GM12878 (cell line): ENCODE measurements at regions of chrX and their contacts with region 1.

Region 1: DNA sequence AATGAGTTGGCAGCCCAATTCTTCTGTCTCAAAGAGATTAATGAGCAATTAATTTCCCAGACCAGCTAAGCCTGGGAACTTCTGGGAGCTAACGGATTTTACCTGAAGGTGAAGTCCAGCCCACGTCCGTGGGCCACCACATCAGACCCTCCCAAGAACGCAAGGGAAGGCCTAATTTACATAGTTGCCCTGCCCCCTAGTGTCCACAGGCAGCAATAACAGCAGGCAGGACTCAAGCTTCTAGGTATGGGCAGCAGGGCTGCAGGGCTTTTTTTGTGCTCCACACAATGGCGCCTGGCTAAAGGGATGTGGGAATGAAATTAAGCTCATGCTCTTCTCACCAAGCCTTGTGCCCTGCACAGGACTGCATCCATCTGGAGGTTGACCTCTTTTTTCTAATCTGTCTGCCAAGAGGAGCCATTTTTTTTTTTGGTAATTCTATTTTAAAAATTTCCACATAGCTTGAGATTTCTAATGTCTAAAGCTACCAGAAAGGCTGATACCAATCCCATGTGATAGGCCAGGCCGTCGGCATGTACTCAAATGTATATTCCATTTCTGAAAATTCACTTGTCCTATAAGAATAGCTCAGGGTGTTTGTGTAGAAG is 111.9 kb upstream of the TMEM164 start:
- DNase-seq: no peak
- ATAC-seq: peak; percentile 77
- H3K4me3 ChIP-seq: no peak overlapping the region
- H3K27ac ChIP-seq: no peak overlapping the region
- H3K4me1 ChIP-seq: peaks cover 16% of the 10 kb centered on the region
- H3K27me3 ChIP-seq: no peaks in the 10 kb centered on the region
- CTCF ChIP-seq: peak; percentile 85 to 96 (median 94)
- EP300 ChIP-seq: no peak
- POLR2A ChIP-seq: no peak
- RAD21 ChIP-seq: peak; percentile 81

Region 2: GRCh38 chrX:109485470-109486340 is 405.3 kb before region 1 on chrX:
- CTCF ChIA-PET with region 1: interaction called, 164 read pairs
- POLR2A ChIA-PET with region 1: interaction called, 3 read pairs
- RAD21 ChIA-PET with region 1: interaction called, 74 read pairs
- SMC1A ChIA-PET with region 1: interaction called, 49 read pairs
- in situ Hi-C with region 1: loop called (anchors 5 kb)
- intact Hi-C with region 1: loop called (anchors 1 kb)
- DNase-seq: peak; percentile 34
- ATAC-seq: peak; percentile 84
- H3K4me3 ChIP-seq: no peak overlapping the region
- H3K27ac ChIP-seq: no peak overlapping the region
- H3K4me1 ChIP-seq: no peaks in the 10 kb centered on the region
- H3K27me3 ChIP-seq: no peaks in the 10 kb centered on the region
- CTCF ChIP-seq: peak; percentile 93 to 99 (median 99); a peak in 5 of 6 replicates
- EP300 ChIP-seq: no peak
- POLR2A ChIP-seq: no peak
- RAD21 ChIP-seq: peak; percentile 91

Region 3: DNA sequence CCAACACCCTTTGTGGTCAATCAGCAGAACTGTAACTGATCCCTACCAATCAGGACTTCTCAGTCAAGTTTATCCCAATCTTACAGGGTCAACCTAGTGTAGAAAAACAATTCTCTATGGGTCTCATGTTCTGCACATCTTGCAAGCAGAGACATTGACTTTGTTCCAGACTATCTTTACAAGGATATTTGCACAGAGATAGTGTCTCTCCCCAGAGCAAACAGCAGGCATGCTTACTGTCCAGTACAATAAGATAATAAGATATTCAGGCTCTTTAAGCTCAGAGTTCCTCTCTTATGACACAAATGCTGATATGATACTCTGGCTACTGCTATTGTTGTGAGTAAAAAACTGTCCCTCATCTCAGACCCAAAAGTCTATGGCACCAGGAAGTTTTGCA is 211.2 kb before region 1 on chrX:
- CTCF ChIA-PET with region 1: interaction called, 10 read pairs
- POLR2A ChIA-PET with region 1: no interaction called
- RAD21 ChIA-PET with region 1: no interaction called
- SMC1A ChIA-PET with region 1: no interaction called
- in situ Hi-C with region 1: no loop called
- intact Hi-C with region 1: no loop called
- DNase-seq: no peak
- ATAC-seq: no peak
- H3K4me3 ChIP-seq: no peak overlapping the region
- H3K27ac ChIP-seq: no peak overlapping the region
- H3K4me1 ChIP-seq: no peaks in the 10 kb centered on the region
- H3K27me3 ChIP-seq: no peaks in the 10 kb centered on the region
- CTCF ChIP-seq: no peak
- EP300 ChIP-seq: no peak
- POLR2A ChIP-seq: no peak
- RAD21 ChIP-seq: no peak

Region 4: DNA sequence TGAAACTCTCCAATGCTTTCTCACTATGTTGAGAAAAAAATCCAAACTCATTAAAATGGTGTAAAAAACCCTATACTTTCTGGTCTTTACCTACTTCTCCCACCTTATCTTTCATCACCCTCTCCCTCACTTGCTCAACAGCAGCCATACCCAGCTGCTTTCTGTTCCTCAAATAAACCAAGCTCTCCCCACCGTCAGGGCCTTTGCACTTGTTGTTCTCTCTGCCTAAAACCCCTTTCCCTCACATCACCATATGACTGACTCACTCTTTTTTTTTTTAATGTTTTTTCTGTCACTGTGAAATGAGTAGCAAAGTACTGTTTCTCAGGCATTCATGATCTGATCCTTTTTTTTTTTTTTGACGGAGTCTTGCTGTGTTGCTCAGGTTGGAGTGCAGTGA is 10.4 kb before region 1 on chrX:
- CTCF ChIA-PET with region 1: interaction called, 52 read pairs
- POLR2A ChIA-PET with region 1: interaction called, 4 read pairs
- RAD21 ChIA-PET with region 1: interaction called, 48 read pairs
- SMC1A ChIA-PET with region 1: interaction called, 16 read pairs
- in situ Hi-C with region 1: no loop called
- intact Hi-C with region 1: no loop called
- DNase-seq: peak; percentile 39
- ATAC-seq: peak; percentile 98
- H3K4me3 ChIP-seq: no peak overlapping the region
- H3K27ac ChIP-seq: no peak overlapping the region
- H3K4me1 ChIP-seq: no peaks in the 10 kb centered on the region
- H3K27me3 ChIP-seq: no peaks in the 10 kb centered on the region
- CTCF ChIP-seq: no peak
- EP300 ChIP-seq: peak in 1 of 2 experiments; percentile 28; a peak in 1 of 4 replicates
- POLR2A ChIP-seq: no peak
- RAD21 ChIP-seq: no peak

Region 5: DNA sequence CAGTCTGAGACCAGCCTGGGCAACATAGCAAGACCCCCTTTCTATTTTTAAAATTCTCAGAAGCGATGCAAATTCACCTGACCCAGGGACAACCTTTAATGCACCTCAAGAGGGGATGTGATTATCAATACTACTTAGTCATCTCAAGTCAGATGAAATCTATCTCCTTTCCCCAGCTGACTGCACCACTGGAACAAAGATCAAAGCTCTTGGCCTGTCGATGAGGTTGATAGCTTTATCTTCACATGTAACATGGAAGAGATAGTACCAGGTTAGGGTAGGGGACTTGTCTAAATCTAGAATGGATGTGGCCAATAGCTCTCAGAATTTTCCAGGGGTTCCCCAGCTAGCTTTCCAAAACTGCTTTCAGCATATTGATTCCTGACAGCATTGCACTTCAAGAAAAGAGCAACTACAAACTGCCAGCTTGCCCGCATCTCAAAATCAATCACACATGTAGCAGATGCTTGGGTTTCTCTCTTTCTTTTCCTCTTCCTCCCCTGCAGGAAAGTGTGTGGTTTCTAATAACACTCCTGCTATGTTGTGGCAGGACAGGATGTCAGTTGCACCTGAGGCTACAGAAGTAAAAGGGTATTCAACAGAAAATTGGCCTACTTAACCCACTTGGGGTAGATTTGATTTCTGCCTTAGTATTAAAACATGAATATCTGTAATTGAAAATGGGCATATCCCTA is 99.7 kb after region 1 on chrX:
- CTCF ChIA-PET with region 1: no interaction called
- POLR2A ChIA-PET with region 1: no interaction called
- RAD21 ChIA-PET with region 1: no interaction called
- SMC1A ChIA-PET with region 1: no interaction called
- in situ Hi-C with region 1: no loop called
- intact Hi-C with region 1: no loop called
- DNase-seq: no peak
- ATAC-seq: no peak
- H3K4me3 ChIP-seq: no peak overlapping the region
- H3K27ac ChIP-seq: no peak overlapping the region
- H3K4me1 ChIP-seq: no peaks in the 10 kb centered on the region
- H3K27me3 ChIP-seq: no peaks in the 10 kb centered on the region
- CTCF ChIP-seq: no peak
- EP300 ChIP-seq: no peak
- POLR2A ChIP-seq: no peak
- RAD21 ChIP-seq: no peak